ENCODE measurements at regions of chr10 and their contacts with region 1.

Region 1: DNA sequence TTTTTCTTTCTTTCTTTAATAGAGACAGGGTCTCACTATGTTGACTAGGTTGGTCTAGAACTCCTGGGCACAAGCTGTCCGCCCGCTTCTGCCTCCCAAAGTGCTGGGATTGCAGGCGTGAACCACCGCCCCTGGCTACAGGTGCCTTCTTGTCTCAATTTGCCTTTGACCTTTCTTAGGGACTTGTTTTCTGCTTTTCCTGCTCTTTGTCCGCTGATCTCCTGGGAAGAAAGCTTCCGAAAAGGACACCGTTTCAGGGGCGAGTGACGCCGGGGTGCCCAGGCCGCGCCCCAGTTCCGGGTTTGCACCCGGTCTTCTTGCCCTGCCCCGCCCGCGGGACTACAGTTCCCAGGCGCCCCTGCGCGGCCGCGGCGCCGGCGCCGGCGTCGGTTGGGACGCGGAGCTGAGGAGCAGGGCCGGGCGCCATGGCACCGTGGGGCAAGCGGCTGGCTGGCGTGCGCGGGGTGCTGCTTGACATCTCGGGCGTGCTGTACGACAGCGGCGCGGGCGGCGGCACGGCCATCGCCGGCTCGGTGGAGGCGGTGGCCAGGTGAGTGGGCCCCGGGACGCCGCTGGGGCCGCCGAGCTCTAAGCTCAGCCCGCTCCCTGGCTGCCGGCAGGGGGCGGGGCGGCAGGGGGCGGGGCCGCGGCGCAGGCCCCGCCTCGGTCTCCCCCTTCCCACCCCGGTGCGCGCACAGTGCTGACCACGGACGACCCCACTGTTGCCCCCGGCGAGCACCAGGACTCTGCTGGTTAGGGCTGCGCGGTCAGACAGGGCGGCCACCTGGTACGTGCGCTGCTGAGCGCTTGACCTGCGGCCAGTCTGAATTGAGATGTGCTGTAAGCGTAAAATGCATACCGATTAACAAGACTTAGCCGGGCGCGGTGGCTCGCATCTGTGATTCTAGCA is at the start of gene LHPP:
- DNase-seq: peak; percentile 73
- ATAC-seq: peak; percentile 99
- H3K4me3 ChIP-seq: peak within 1 kb of the TSS; percentile 86
- H3K27ac ChIP-seq: no peak within 1 kb of the TSS
- H3K4me1 ChIP-seq: no peaks in the 10 kb centered on the region
- H3K27me3 ChIP-seq: no peaks in the 10 kb centered on the region
- CTCF ChIP-seq: no peak
- total RNA-seq, gene LHPP: 6.6 and 13.5 TPM in 2 replicates

Region 2: GRCh38 chr10:124388823-124389612 is 72.7 kb before region 1 on chr10:
- CTCF ChIA-PET with region 1: no interaction called
- POLR2A ChIA-PET with region 1: interaction called, 12 read pairs
- intact Hi-C with region 1: no loop called
- DNase-seq: peak; percentile 86
- ATAC-seq: peak; percentile 87
- H3K4me3 ChIP-seq: peak overlapping the region; percentile 67
- H3K27ac ChIP-seq: no peak overlapping the region
- H3K4me1 ChIP-seq: peaks cover 11% of the 10 kb centered on the region; the same call in 1 of the 2 replicates
- H3K27me3 ChIP-seq: no peaks in the 10 kb centered on the region
- CTCF ChIP-seq: peak; percentile 73

Region 3: GRCh38 chr10:124409696-124410095 is 52.0 kb before region 1 on chr10:
- CTCF ChIA-PET with region 1: no interaction called
- POLR2A ChIA-PET with region 1: no interaction called
- intact Hi-C with region 1: no loop called
- DNase-seq: no peak
- ATAC-seq: no peak
- H3K4me3 ChIP-seq: no peak overlapping the region
- H3K27ac ChIP-seq: no peak overlapping the region
- H3K4me1 ChIP-seq: no peaks in the 10 kb centered on the region
- H3K27me3 ChIP-seq: no peaks in the 10 kb centered on the region
- CTCF ChIP-seq: no peak

Region 4: DNA sequence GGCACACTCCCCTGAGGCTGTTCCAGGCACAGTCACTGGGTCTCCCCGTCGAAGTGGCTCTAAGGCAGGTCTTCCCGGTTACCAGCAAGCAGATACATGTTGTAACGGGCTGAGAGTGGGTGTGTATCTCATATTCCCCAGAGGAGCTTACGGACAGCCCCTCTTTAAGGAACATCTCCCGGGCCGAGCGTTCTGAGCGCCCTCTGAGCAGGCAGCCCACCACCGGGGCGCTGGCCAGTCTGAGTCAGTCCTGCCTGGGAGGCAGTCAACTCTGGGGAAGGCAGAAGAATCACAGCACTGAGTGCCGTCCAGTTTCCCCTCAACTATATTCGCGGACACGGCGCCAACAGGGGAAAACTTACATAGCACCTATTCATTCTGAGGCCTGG is 117.3 kb after region 1 on chr10:
- CTCF ChIA-PET with region 1: no interaction called
- POLR2A ChIA-PET with region 1: no interaction called
- intact Hi-C with region 1: no loop called
- DNase-seq: no peak
- ATAC-seq: no peak
- H3K4me3 ChIP-seq: no peak overlapping the region
- H3K27ac ChIP-seq: no peak overlapping the region
- H3K4me1 ChIP-seq: no peaks in the 10 kb centered on the region
- H3K27me3 ChIP-seq: no peaks in the 10 kb centered on the region
- CTCF ChIP-seq: no peak